ENCODE measurements at regions of chr20 and their contacts with region 1.

Region 1: DNA sequence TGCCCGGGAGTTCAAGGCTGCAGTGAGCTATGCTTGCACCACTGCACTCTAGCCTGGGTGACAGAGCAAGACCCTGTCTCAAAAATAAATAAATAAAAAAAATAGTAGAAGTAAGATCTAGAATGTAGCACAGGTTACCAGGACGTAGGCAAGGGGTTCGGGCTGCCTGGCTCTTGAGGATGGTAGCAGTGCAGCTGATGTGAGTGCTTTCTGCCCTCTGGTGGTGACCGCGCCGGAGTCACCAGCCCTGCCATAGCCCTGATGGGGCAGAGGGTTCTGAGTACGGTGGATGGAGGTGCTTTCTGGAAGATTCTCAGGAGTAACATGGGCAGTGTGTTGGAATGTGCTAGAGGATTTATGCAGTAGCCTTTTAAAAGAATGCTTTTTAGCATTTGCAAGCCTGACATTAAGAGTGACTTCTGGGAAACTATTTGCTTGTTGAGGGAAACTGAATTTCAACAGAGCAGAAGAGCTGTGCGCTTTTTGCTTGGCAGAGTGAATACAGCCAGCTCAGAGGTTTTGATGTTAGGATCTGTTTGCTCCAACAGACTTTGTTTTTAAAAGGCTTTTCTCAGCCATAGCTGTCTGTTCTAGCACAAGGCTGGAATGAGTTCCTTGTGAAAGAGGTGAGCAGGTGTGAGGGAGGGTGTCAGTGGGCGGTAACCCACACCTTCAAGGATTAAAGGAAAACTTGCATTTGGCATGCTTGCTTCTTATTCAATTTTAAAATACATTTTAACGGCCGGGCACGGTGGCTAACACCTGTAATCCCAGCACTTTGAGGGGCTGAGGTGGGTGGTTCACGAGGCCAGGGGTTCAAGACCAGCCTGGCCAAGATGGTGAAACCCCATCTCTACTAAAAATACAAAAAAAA is 65.9 kb downstream of the PTPN1 start:
- DNase-seq: peak; percentile 70
- ATAC-seq: peak; percentile 60 to 61

Region 2: DNA sequence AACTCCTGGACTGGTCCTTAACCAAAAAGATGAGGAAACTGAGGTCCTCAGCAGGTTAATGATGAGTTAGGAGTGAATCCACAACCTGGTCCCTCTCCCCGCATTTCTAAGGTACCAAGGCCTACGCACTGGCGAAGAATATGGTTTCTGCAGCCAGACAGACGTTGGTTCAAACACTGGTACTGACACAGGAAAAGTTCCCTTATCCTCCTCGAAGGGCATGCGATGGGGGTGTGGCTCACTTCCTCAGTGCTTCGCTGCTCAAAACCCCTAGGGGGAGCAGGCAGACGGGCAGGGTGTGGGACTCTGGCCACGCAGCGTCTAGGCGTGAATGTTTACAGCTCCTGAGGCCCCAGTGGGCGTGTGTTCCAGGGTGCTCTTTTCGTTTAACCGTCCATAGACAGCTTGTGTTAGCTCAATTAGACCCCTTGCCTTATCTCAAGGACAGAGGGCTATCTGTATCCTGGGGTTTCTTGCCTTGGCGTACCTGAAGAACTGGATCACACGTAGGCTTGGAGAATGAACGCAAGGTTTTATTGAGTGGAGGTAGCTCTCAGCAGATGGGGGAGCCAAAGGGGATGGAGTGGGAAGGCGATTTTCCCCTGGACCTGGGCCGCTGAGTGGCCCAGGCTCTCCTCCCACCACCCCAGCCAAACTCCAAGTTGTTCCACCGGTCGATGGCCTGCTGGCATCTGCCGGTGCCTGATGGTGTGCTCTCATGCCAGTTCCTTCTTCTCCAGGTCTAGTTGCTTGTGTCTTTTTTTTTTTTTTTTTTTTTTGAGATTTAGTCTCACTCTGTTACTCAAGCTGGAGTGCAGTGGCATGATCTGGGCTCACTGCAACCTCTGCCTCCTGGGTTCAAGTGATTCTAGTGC is 97.7 kb before region 1 on chr20:
- intact Hi-C with region 1: loop called (anchors 5 to 10 kb)
- DNase-seq: peak; percentile 70
- ATAC-seq: peak; percentile 86 to 90

Region 3: GRCh38 chr20:50491926-50492634 is 84.0 kb before region 1 on chr20:
- intact Hi-C with region 1: no loop called
- DNase-seq: peak; percentile 45
- ATAC-seq: peak in 1 of 2 donors; percentile 64

Region 4: DNA sequence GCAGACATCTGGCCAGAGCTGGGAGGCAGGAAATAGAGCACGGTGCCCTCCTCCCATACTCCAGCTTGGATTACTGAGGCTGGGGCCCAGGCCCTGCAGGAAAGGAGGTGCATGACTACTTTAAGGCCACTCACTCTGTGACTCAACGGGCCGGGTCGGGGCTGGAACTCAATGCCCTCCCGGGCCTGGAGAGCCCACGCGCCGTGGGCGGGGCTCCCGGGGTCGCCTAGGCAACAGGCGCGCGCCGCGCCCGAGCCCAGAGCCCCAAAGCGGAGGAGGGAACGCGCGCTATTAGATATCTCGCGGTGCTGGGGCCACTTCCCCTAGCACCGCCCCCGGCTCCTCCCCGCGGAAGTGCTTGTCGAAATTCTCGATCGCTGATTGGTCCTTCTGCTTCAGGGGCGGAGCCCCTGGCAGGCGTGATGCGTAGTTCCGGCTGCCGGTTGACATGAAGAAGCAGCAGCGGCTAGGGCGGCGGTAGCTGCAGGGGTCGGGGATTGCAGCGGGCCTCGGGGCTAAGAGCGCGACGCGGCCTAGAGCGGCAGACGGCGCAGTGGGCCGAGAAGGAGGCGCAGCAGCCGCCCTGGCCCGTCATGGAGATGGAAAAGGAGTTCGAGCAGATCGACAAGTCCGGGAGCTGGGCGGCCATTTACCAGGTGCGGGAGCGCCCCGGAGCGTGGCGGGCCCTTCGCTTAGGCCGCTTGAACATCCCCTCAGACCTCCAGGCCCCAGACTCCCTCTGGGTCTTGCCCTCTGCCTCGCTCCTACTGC is 66.0 kb before region 1 on chr20 and contains the start of gene PTPN1:
- intact Hi-C with region 1: loop called in 1 of 2 experiments (anchors 2 kb)
- DNase-seq: peak; percentile 99
- ATAC-seq: peak; percentile 99
- total RNA-seq, gene PTPN1: 22.8 to 40.4 TPM

Region 5: GRCh38 chr20:50528804-50529351 is 47.2 kb before region 1 on chr20:
- intact Hi-C with region 1: no loop called
- DNase-seq: no peak
- ATAC-seq: peak in 1 of 2 donors; percentile 32

Region 6: DNA sequence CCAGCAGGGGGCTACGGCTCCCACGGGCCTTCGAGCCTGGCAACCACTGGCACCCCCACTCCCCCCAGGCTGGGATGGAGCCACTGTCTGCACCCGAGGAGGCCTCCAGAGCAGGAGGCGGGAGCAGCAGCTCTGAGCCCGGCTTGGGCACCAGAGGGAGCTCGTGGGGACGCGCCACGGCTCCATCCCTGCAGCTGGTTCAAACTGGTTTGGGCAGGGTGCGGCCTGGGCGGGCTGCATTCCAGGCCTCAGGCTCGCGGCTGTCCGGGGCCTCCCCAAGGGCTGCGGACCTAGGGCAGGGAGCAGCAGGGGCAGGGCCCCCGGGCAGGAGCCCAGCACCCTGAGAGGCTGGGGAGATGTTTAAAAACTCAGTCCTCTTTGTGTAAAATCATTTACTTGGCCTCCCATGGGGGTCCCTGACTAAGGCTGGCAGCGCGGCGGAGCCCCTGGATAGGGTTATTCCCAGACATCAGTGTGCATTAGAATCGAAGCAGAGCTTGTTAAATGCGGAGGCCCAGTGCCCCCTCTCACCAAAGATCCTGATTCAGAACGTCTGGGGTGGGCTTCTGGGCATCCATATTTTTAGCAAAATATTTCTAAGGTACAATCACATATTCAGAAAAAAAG is 214.7 kb after region 1 on chr20:
- intact Hi-C with region 1: no loop called
- DNase-seq: peak; percentile 91
- ATAC-seq: peak; percentile 85 to 88

Measured in left cardiac atrium (tissue), 4 donors.